ENCODE measurements at regions of chr4 and their contacts with region 1.

Region 1: DNA sequence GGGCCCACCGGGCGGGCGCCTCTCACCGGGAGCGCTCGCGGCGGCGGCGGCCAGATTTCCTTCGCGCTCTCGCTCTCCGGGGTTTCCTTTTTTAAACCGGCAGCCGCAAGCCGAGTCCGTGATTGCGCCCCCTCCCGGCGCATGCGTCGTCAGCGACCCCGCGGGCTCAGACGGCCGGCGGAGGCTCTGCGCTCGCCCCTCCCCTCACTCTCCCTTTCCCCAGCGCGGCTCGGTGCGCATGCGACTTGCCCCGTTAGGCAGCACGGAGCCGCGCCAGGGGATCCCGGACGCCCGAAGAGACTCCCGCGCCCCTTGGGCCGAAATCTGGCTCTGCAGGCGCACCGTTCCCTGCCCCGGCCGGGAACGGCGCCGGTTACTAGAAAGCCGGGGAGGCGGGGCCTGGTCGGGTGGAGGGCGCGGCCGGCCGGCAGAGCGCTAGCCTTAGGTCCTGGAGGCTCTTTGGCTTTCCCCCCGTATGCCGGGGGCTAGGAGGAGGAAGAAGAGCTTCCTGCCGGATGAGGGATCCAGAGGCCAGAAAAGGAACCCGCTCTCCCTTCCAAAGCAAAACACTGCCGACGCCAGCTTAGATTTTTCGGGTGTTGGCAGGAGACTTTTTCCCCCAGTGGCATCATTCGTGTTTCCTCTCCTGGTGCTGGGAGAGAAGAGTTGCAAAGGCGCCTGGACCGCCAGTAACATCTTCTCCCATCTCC is at the start of gene CLOCK:
- DNase-seq: peak; percentile 90
- ATAC-seq: peak; percentile 77
- H3K4me3 Mint-ChIP-seq: peak within 1 kb of the TSS; percentile 90
- H3K27ac Mint-ChIP-seq: peak within 1 kb of the TSS; percentile 86
- H3K4me1 Mint-ChIP-seq: peaks cover 46% of the 10 kb centered on the region
- H3K27me3 Mint-ChIP-seq: peaks cover 7% of the 10 kb centered on the region
- total RNA-seq, gene CLOCK: 10.4 to 13.3 TPM

Region 2: DNA sequence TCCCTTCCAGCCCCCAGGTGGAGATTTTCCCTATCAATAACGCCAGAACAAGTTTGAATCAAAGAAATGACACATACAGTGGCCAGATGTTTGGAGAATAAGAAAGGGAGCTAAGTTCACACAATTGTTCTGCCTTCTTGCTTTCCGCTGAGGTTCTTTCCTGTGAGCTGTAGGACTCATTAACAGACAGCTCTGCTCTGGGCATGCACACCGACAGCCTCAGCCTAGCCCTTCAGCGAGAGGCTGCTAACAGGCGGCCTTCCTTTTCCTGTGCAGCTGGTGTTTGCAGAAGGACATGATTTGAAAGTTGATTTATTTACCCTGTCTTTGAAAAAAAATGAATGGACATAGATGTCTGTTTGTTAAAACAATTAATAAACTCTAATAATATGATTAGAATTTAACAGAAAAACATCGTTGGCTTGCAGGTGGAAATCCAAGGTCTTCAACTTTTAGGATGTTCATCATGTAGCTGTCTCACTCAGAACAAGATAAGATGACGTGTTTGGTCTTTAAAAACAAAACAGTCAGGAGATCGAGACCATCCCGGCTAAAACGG is 604.8 kb before region 1 on chr4:
- CTCF ChIA-PET with region 1: no interaction called
- POLR2A ChIA-PET with region 1: no interaction called
- intact Hi-C with region 1: loop called in 1 of 2 experiments (anchors 5 kb)
- DNase-seq: peak; percentile 58
- ATAC-seq: peak; percentile 77
- H3K4me3 Mint-ChIP-seq: peak overlapping the region; percentile 31
- H3K27ac Mint-ChIP-seq: peak overlapping the region; percentile 59
- H3K4me1 Mint-ChIP-seq: peaks cover 44% of the 10 kb centered on the region
- H3K27me3 Mint-ChIP-seq: no peaks in the 10 kb centered on the region

Region 3: DNA sequence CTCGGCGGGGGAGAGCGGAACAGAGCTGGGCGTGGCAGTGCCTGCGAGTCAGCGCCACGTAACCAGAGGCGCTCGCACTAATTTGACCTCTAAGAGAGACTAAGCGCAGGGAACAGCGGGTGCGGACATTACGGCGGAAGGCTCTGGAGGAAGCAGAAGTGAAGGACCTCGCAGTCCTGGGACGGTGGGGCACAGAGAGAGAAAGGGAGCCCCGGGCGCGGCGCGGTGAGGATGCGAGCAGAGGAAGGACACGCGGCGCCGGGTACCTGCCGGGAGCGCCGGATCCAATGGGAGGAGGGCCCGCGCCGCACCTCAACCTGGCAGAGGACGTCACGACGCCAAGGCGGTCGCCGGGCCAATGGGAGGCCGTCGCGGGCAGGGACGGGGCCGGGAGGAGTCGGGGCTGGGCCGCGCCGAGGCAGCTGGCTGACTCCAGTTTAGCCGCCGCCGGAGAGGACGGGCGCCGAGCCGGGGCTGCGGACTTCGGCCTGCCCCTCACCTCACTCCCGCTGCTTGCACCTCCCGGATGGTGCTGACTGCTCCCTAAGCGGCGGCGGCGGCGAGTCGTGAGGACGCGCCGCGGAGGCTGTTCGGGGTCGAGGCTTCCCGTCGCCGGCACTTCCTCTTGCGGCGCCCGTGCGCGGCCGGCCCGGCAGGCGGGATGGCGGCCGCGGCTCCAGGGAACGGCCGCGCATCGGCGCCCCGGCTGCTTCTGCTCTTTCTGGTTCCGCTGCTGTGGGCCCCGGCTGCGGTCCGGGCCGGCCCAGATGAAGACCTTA is 151.2 kb before region 1 on chr4 and contains the start of gene TMEM165:
- CTCF ChIA-PET with region 1: interaction called, 4 read pairs
- POLR2A ChIA-PET with region 1: no interaction called
- intact Hi-C with region 1: loop called (anchors 1 kb)
- DNase-seq: peak; percentile 96
- ATAC-seq: peak; percentile 97
- H3K4me3 Mint-ChIP-seq: peak within 1 kb of the TSS; percentile 89
- H3K27ac Mint-ChIP-seq: peak within 1 kb of the TSS; percentile 89
- H3K4me1 Mint-ChIP-seq: peaks cover 30% of the 10 kb centered on the region
- H3K27me3 Mint-ChIP-seq: no peaks in the 10 kb centered on the region
- total RNA-seq, gene TMEM165: 43.4 to 49.5 TPM

Region 4: DNA sequence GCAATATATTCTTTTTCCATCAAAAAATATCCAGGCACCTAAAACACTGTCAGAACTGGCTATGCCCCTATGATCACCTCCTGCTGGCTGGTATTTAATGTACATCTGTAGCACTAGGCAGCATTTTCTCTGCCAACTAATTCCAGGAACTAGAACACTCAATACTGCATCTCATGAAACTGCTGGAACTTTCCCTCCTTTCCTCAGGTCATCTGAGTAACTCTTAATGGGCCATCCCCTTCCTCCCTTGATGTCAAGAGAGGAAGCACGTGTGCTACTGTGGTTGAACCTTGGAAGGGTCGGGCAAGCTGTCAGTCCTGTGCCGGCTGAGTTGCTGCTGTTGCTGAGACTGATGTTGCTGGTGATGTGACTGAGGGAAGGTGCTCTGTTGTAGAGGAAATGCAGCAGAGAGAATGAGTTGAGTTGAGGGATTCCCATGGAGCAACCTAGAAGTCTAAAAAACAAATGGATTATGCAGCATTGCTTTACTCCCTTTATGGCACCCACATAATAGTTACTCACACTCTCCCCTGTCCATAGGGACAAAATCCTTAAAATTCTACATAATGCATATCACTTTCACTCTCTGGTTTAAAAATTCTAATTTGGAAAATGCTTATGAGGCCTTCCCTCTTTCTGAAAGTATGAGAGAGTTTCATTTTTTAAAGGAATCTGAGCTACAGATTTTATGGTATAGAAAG is 111.6 kb before region 1 on chr4:
- CTCF ChIA-PET with region 1: no interaction called
- POLR2A ChIA-PET with region 1: no interaction called
- intact Hi-C with region 1: loop called (anchors 5 kb)
- DNase-seq: peak; percentile 62
- ATAC-seq: peak; percentile 96
- H3K4me3 Mint-ChIP-seq: no peak overlapping the region
- H3K27ac Mint-ChIP-seq: peak overlapping the region; percentile 73
- H3K4me1 Mint-ChIP-seq: peaks cover 15% of the 10 kb centered on the region
- H3K27me3 Mint-ChIP-seq: no peaks in the 10 kb centered on the region

Region 5: GRCh38 chr4:55866973-55867574 is 320.2 kb after region 1 on chr4:
- CTCF ChIA-PET with region 1: no interaction called
- POLR2A ChIA-PET with region 1: no interaction called
- intact Hi-C with region 1: loop called (anchors 1 to 5 kb)
- DNase-seq: peak; percentile 20
- ATAC-seq: peak; percentile 62
- H3K4me3 Mint-ChIP-seq: no peak overlapping the region
- H3K27ac Mint-ChIP-seq: no peak overlapping the region
- H3K4me1 Mint-ChIP-seq: peaks cover 20% of the 10 kb centered on the region
- H3K27me3 Mint-ChIP-seq: no peaks in the 10 kb centered on the region

Region 6: DNA sequence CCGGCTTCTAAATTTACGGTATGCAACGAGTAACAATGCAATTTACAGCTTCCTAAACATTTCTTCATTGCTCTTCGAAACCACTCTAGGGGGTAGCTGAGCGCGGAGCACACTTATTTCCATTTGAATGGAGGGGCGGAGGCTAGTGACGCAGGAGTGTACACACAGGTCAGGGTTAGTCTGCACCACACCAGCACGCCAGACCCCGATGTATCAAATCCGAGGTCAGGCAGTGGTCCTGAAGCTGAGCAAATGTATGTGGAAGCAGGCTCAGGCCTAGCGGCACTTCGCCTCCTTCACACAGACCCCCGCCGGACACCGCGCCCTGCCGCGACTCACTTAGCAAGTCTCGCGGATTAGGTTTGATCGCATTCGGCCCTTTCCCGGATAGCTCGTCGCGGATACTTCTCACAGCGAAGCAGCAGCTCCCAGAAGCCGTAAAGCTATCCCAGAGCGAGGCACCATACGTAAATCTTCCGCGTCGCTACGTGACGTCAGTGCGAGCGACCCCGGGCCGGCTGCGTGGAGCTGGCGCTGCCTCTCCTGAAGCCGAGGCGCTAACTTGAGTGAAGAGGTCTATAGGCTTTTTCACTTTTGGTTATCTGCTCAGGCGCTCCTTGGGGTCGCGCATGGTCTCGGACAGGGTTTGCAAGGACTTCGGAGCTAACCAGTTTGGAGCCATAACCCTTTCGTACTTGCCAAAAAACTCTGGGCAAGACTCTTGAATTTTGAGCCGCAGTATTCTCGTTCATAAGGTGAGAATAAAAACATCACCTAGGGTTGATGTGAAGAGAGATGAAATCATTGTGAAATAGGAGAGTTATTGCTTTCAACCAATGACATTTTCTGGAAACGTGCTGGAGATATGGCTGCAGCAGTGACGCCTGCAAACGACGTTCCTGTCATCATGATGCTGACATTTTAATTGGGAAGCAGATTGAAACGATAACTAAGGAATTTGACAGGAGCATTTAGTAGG is 840.4 kb after region 1 on chr4 and contains the start of gene AASDH:
- CTCF ChIA-PET with region 1: no interaction called
- POLR2A ChIA-PET with region 1: no interaction called
- intact Hi-C with region 1: loop called in 1 of 2 experiments (anchors 2 kb)
- DNase-seq: peak; percentile 97
- ATAC-seq: peak; percentile 94
- H3K4me3 Mint-ChIP-seq: peak within 1 kb of the TSS; percentile 98
- H3K27ac Mint-ChIP-seq: peak within 1 kb of the TSS; percentile 100
- H3K4me1 Mint-ChIP-seq: peaks cover 31% of the 10 kb centered on the region
- H3K27me3 Mint-ChIP-seq: no peaks in the 10 kb centered on the region
- total RNA-seq, gene AASDH: 13.3 to 16.4 TPM

Measured in activated CD4-positive, alpha-beta T cell treated with anti-CD3 and anti-CD28 coated beads for 36 hours (primary cell).